ENCODE measurements at regions of chrX and their contacts with region 1.

Region 1: GRCh38 chrX:132609394-132609793 is 120.6 kb upstream of the MBNL3 start:
- DNase-seq: no peak
- H3K4me3 ChIP-seq: no peak overlapping the region
- H3K27ac ChIP-seq: no peak overlapping the region
- H3K4me1 ChIP-seq: no peaks in the 10 kb centered on the region
- H3K27me3 ChIP-seq: no peaks in the 10 kb centered on the region

Region 2: DNA sequence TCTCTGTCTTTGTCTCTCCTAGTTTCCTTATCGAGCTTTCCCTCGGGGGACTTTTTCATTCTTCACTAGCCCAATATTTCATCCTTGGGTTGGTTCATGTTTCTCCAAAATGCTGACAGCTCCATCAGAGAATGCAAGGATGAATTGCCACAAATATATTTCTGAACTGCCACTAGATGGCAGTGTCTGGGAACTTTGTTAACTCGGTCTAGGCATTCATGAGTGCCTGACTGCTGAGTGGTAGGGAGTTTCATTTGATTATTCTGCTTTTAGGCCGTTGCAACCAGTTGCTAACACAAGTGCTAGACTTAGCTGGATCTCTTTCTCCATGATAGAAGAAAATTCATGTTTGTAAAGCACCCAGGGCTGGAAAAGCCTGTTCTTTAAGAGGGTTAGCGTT is 316.6 kb before region 1 on chrX:
- in situ Hi-C with region 1: loop called (anchors 10 kb)
- DNase-seq: peak; percentile 61
- H3K4me3 ChIP-seq: no peak overlapping the region
- H3K27ac ChIP-seq: no peak overlapping the region
- H3K4me1 ChIP-seq: no peaks in the 10 kb centered on the region
- H3K27me3 ChIP-seq: no peaks in the 10 kb centered on the region

Region 3: DNA sequence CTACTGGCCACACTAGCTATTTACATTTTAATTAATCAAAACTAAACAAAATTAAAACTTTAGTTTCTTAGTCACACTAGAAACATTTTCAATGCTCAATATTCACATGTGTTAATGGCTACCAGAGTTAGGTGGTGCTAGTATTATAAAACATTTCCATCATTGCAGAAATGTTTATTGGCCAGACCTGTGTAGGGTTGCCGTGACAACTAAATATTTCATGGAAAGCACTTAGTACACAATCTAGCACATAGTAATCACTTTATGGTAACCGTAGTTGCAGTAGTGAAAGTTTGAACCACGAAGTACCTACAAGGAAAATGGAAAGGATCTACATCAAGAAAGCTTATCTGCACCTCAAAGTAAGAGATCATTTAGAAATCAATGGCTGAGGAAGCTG is 253.2 kb after region 1 on chrX:
- in situ Hi-C with region 1: no loop called
- DNase-seq: no peak
- H3K4me3 ChIP-seq: no peak overlapping the region
- H3K27ac ChIP-seq: no peak overlapping the region
- H3K4me1 ChIP-seq: no peaks in the 10 kb centered on the region
- H3K27me3 ChIP-seq: no peaks in the 10 kb centered on the region

Region 4: GRCh38 chrX:132968296-132968949 is 359.0 kb after region 1 on chrX:
- in situ Hi-C with region 1: no loop called
- DNase-seq: no peak
- H3K4me3 ChIP-seq: no peak overlapping the region
- H3K27ac ChIP-seq: no peak overlapping the region
- H3K4me1 ChIP-seq: no peaks in the 10 kb centered on the region
- H3K27me3 ChIP-seq: no peaks in the 10 kb centered on the region